ENCODE measurements at regions of chr3 and their contacts with region 1.

Region 1: GRCh38 chr3:155805802-155806618 is at the start of gene C3orf33:
- DNase-seq: peak; percentile 73
- ATAC-seq: peak; percentile 95
- H3K4me3 Mint-ChIP-seq: peak within 1 kb of the TSS; percentile 83
- H3K27ac Mint-ChIP-seq: no peak within 1 kb of the TSS
- H3K4me1 Mint-ChIP-seq: no peaks in the 10 kb centered on the region
- H3K27me3 Mint-ChIP-seq: no peaks in the 10 kb centered on the region; the same call in 1 of the 2 replicates
- CTCF ChIP-seq: peak; percentile 80
- total RNA-seq, gene C3orf33: 2.8 to 3.0 TPM (median 3.0 TPM) in 3 replicates

Region 2: GRCh38 chr3:155646128-155646527 is 159.9 kb before region 1 on chr3:
- CTCF ChIA-PET with region 1: no interaction called
- POLR2A ChIA-PET with region 1: no interaction called
- DNase-seq: no peak
- ATAC-seq: no peak
- H3K4me3 Mint-ChIP-seq: no peak overlapping the region
- H3K27ac Mint-ChIP-seq: no peak overlapping the region
- H3K4me1 Mint-ChIP-seq: peaks cover 20% of the 10 kb centered on the region
- H3K27me3 Mint-ChIP-seq: no peaks in the 10 kb centered on the region
- CTCF ChIP-seq: no peak

Region 3: GRCh38 chr3:155737844-155738460 is 68.1 kb before region 1 on chr3:
- CTCF ChIA-PET with region 1: interaction called, 15 read pairs
- POLR2A ChIA-PET with region 1: interaction called, 8 read pairs
- DNase-seq: no peak
- ATAC-seq: peak; percentile 55; the same call in 1 of the 2 replicates
- H3K4me3 Mint-ChIP-seq: no peak overlapping the region
- H3K27ac Mint-ChIP-seq: peak overlapping the region; percentile 64
- H3K4me1 Mint-ChIP-seq: peaks cover 27% of the 10 kb centered on the region
- H3K27me3 Mint-ChIP-seq: no peaks in the 10 kb centered on the region
- CTCF ChIP-seq: no peak

Region 4: GRCh38 chr3:155753036-155753639 is 52.9 kb before region 1 on chr3:
- CTCF ChIA-PET with region 1: interaction called, 21 read pairs
- POLR2A ChIA-PET with region 1: no interaction called
- DNase-seq: no peak
- ATAC-seq: peak; percentile 38
- H3K4me3 Mint-ChIP-seq: no peak overlapping the region
- H3K27ac Mint-ChIP-seq: no peak overlapping the region
- H3K4me1 Mint-ChIP-seq: peaks cover 35% of the 10 kb centered on the region
- H3K27me3 Mint-ChIP-seq: no peaks in the 10 kb centered on the region
- CTCF ChIP-seq: peak; percentile 36; the same call in 1 of the 2 replicates

Region 5: DNA sequence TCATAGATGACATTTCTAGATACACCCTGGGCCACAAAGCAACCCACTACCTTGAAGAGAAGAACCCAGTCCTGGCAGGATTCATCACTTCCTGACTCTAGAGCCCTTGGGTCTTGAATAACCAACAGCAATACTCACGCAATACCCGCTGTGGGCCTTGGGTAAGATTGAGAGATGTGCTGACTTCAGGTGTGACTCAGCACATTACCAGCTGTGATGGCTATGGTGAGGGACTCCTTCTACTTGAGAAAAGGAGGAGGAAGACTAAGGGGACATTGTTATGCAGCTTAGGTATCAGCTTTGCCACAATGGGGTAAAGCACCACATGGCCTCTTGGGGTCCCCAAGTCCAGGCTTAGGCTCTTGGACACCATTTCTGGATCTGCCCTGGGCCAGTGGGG is 14.8 kb before region 1 on chr3:
- CTCF ChIA-PET with region 1: interaction called, 23 read pairs
- POLR2A ChIA-PET with region 1: no interaction called
- DNase-seq: no peak
- ATAC-seq: peak; percentile 51
- H3K4me3 Mint-ChIP-seq: no peak overlapping the region
- H3K27ac Mint-ChIP-seq: 0 out of 2 replicates have a peak overlapping the region, but pooled peaks have one; percentile 11
- H3K4me1 Mint-ChIP-seq: peaks cover 12% of the 10 kb centered on the region
- H3K27me3 Mint-ChIP-seq: no peaks in the 10 kb centered on the region
- CTCF ChIP-seq: no peak

Region 6: GRCh38 chr3:155854141-155854940 is 48.3 kb after region 1 on chr3 and contains the start of gene SLC33A1:
- CTCF ChIA-PET with region 1: interaction called, 31 read pairs
- POLR2A ChIA-PET with region 1: interaction called, 5 read pairs
- DNase-seq: peak; percentile 97
- ATAC-seq: peak; percentile 96
- H3K4me3 Mint-ChIP-seq: peak within 1 kb of the TSS; percentile 97
- H3K27ac Mint-ChIP-seq: peak within 1 kb of the TSS; percentile 98
- H3K4me1 Mint-ChIP-seq: peaks cover 24% of the 10 kb centered on the region
- H3K27me3 Mint-ChIP-seq: peaks cover 8% of the 10 kb centered on the region; the same call in 1 of the 2 replicates
- CTCF ChIP-seq: no peak
- total RNA-seq, gene SLC33A1: 19.8 to 24.9 TPM (median 21.6 TPM) in 3 replicates

Region 7: GRCh38 chr3:155983838-155984474 is 177.9 kb after region 1 on chr3:
- CTCF ChIA-PET with region 1: interaction called, 11 read pairs
- POLR2A ChIA-PET with region 1: no interaction called
- DNase-seq: no peak
- ATAC-seq: peak; percentile 51
- H3K4me3 Mint-ChIP-seq: no peak overlapping the region
- H3K27ac Mint-ChIP-seq: no peak overlapping the region
- H3K4me1 Mint-ChIP-seq: peaks cover 17% of the 10 kb centered on the region
- H3K27me3 Mint-ChIP-seq: no peaks in the 10 kb centered on the region
- CTCF ChIP-seq: no peak